ENCODE measurements at regions of chr3 and their contacts with region 1.

Region 1: DNA sequence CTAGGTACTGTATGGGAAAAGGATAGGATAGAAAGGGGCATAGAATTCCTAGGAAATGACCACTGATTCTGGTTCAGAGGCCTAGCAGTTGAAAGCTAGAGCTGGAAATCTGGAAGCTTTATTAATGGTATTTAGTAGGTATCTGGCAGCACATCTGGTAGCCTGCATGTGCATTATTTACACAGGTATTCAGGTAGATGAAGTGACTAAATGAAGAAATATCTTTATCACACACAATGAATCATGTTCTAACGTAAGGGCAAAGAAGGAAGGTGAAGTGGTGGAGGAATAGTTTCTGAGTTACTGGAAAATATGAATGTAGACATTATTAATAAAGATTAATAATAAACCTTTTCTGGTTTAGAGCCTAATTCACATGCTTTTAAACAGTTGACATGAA is 119.9 kb downstream of the MBNL1 start:
- DNase-seq: no peak
- ATAC-seq: no peak
- H3K4me3 Mint-ChIP-seq: no peak overlapping the region
- H3K27ac Mint-ChIP-seq: no peak overlapping the region
- H3K4me1 Mint-ChIP-seq: peaks cover 74% of the 10 kb centered on the region
- H3K27me3 Mint-ChIP-seq: no peaks in the 10 kb centered on the region

Region 2: DNA sequence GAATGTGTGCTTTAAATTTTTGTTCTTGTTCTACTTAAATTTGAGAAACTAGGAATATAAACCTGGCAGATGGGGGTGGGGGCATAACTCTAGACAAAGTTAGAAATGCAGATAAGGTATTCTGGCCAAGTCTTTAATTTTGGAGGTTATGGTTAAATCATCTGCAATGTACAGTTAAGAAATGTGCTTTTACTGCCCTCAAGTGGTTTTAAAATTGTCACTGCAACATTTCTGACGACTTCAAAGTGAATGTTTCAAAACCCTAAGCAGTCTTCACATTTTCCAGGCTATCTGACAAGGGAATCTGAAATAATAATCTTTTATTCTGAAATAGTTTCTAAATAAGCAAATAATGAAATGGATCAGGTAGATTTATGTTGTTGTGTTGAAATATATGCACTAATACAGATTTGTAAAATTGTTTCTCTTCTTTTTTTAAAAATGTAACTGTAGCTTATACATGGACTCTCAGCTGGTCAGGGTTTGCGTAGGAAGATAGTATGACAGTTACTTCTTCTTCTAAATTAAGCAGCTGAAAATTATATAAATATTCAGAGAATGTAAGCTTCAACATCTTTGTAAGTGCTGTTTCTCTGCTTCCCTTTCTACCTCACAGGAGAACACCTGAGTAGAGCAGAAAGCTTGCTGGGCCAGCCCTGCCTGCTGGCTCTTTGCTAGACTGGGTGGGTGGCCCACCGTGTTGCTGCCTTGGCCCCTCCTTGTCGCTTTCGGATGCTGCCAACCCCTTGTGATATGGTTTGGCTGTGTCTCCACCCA is 470.2 kb before region 1 on chr3:
- CTCF ChIA-PET with region 1: no interaction called
- POLR2A ChIA-PET with region 1: no interaction called
- intact Hi-C with region 1: no loop called
- DNase-seq: no peak
- ATAC-seq: no peak
- H3K4me3 Mint-ChIP-seq: no peak overlapping the region
- H3K27ac Mint-ChIP-seq: no peak overlapping the region
- H3K4me1 Mint-ChIP-seq: no peaks in the 10 kb centered on the region
- H3K27me3 Mint-ChIP-seq: no peaks in the 10 kb centered on the region

Region 3: DNA sequence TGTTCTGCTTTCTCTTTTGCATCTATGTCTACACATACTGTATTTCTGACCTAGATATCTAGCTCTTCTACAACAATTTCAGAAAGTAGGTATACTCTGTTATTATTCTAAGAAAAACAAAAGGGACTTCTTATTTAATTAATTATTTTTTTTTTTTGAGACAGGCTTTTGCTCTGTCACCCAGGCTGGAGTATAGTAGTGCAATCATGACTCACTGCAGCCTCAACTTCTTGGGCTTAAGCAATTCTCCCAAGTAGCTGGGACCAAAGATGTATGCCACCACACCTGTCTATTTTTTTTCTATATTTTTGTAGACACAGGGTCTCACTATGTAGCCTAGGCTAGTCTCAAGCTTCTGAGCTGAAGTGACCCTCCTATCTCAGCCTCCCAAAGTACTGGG is 10.7 kb after region 1 on chr3:
- CTCF ChIA-PET with region 1: interaction called, 14 read pairs
- POLR2A ChIA-PET with region 1: no interaction called
- intact Hi-C with region 1: loop called in 1 of 2 experiments (anchors 1 kb)
- DNase-seq: peak; percentile 28
- ATAC-seq: peak; percentile 35
- H3K4me3 Mint-ChIP-seq: no peak overlapping the region
- H3K27ac Mint-ChIP-seq: peak overlapping the region; percentile 74
- H3K4me1 Mint-ChIP-seq: peaks cover 63% of the 10 kb centered on the region
- H3K27me3 Mint-ChIP-seq: no peaks in the 10 kb centered on the region

Region 4: GRCh38 chr3:152405915-152406802 is 17.5 kb after region 1 on chr3:
- CTCF ChIA-PET with region 1: interaction called, 11 read pairs
- POLR2A ChIA-PET with region 1: no interaction called
- intact Hi-C with region 1: no loop called
- DNase-seq: no peak
- ATAC-seq: no peak
- H3K4me3 Mint-ChIP-seq: no peak overlapping the region
- H3K27ac Mint-ChIP-seq: peak overlapping the region; percentile 1
- H3K4me1 Mint-ChIP-seq: peaks cover 74% of the 10 kb centered on the region
- H3K27me3 Mint-ChIP-seq: no peaks in the 10 kb centered on the region

Measured in activated CD4-positive, alpha-beta T cell treated with anti-CD3 and anti-CD28 coated beads for 36 hours (primary cell).